Activated CD8-positive, alpha-beta T cell treated with anti-CD3 and anti-CD28 coated beads, Interleukin-2, amount 10 ng/mL, durations not matched to agents 7 days and 5 days (primary cell): ENCODE measurements at regions of chr9 and their contacts with region 1.

Region 1: DNA sequence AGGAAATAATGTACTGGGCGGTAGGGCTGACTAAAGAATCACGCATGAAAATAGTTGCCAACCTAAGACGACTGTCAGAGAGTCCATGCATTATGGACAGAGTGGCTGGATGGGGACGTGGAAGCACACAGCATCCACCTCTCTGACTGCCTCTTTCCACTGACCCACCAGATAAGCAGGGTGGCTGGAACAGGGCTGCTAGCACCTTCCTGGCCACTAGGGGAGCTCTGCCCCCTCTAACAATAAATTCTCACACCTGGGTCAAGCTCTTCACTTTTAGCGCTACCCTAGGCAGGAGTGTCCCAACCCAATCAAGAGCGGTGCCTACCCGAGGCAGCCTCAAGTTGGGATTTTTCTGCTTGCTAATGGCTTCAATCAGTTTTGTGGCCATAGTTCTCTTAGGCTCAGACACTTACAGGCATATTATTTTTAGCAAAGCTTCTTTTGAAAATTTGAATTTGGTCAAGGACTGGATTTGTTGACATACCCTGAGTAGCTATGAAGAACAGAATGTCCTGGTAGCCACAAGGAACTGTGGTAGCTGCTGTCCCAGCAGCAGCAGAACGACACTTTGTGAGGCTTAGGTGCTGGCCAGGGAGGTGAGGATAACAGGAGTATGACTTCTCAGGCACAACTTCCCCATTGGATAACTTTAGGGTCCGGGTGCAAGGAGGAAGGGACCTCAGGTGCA is 6.9 kb upstream of the TPM2 start:
- DNase-seq: peak; percentile 70
- ATAC-seq: peak; percentile 93
- H3K4me3 Mint-ChIP-seq: no peak overlapping the region
- H3K27ac Mint-ChIP-seq: peak overlapping the region; percentile 52
- H3K4me1 Mint-ChIP-seq: peaks cover 9% of the 10 kb centered on the region
- H3K27me3 Mint-ChIP-seq: no peaks in the 10 kb centered on the region

Region 2: GRCh38 chr9:35603987-35604577 is 92.6 kb before region 1 on chr9:
- CTCF ChIA-PET with region 1: interaction called, 38 read pairs
- POLR2A ChIA-PET with region 1: interaction called, 3 read pairs
- DNase-seq: peak; percentile 100
- ATAC-seq: peak; percentile 88
- H3K4me3 Mint-ChIP-seq: peak overlapping the region; percentile 90
- H3K27ac Mint-ChIP-seq: peak overlapping the region; percentile 96
- H3K4me1 Mint-ChIP-seq: peaks cover 37% of the 10 kb centered on the region
- H3K27me3 Mint-ChIP-seq: no peaks in the 10 kb centered on the region

Region 3: GRCh38 chr9:35616681-35617459 is 79.8 kb before region 1 on chr9:
- CTCF ChIA-PET with region 1: interaction called, 52 read pairs
- POLR2A ChIA-PET with region 1: no interaction called
- DNase-seq: peak; percentile 78
- ATAC-seq: peak; percentile 65
- H3K4me3 Mint-ChIP-seq: peak overlapping the region; percentile 79
- H3K27ac Mint-ChIP-seq: peak overlapping the region; percentile 92
- H3K4me1 Mint-ChIP-seq: peaks cover 62% of the 10 kb centered on the region
- H3K27me3 Mint-ChIP-seq: no peaks in the 10 kb centered on the region

Region 4: DNA sequence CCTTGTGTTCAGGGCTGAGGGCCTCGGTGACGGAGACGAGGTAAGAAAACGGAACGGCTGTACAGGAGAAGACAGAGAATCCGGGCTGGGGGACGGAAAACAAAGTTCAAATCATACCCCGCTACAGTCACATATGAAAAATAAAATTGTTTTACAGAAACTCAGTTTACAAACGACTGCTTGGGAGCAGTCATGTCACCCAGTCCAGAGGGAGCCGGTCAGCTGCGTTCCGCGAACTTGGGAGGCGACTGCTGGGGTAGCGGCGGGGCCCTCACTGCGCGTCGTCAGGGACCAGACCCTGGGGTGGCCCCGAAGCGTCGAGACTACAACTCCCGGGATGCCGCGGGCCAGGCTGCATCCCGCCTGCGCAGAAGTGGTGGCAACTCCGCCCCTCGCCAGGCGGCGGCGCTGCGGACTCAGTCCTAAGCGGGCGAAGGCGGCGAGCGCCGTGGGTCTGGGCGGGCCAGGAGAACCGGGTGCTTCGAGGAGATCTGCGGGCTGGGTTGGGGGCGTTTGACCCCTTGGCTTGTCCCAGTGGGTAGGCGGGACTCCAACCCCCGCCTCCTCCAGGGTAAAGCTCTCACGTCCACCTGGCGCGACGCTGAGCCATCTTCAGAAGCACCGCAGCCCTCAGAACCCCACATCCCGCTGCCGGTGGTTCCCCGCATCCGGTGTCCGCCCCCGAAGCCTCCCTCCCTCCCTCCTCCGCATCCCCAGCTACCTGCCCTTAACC is 50.0 kb before region 1 on chr9:
- CTCF ChIA-PET with region 1: interaction called, 57 read pairs
- POLR2A ChIA-PET with region 1: interaction called, 5 read pairs
- DNase-seq: peak; percentile 97
- ATAC-seq: peak; percentile 83
- H3K4me3 Mint-ChIP-seq: peak overlapping the region; percentile 97
- H3K27ac Mint-ChIP-seq: peak overlapping the region; percentile 96
- H3K4me1 Mint-ChIP-seq: peaks cover 67% of the 10 kb centered on the region
- H3K27me3 Mint-ChIP-seq: no peaks in the 10 kb centered on the region

Region 5: DNA sequence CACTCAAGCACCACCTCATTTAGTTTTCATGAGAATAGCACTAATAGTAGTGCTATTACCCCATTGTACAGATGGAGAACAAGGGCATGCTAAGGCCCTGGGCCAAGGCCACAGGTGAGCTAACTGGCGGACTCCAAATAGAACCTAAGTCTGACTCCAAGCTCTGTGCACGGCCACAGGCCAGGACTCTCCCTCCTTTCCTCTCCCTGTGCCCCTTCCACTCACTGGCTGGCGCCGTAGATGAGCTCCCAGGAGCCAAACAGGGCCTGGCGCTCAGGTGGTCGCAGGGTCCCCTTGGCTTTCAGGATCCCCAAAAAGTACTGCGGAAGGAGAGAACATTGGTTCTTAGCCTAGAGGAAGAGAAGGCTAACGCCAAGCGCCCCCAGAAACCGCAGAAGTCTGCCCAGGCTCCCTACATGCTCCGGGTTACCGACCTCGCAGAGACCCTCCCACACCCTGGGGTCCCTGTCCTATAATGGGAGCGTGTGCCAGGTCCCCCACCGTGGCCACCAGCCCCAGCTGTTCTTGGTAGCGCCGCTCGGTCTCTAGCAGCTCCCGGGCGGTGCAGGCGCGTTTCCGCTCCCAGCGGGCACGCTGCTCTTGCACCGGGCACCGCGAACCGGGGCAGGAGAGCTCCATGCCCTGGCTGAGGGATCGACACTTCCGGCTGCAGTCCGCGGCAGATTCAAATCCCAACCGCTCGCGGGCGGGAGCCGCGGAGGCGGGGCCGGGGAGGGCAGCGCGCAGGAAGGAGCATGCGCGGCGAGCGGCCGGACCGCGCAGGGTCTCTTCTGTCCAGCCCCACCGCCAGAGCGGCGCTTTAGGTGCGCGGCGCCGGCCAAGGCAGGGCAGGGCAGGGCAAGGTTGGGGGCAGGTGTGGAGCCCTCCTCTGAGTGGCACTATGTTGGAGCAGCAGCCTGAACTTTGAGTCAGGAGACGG is 31.9 kb before region 1 on chr9 and contains the start of gene ARHGEF39:
- CTCF ChIA-PET with region 1: interaction called, 64 read pairs
- POLR2A ChIA-PET with region 1: interaction called, 3 read pairs
- DNase-seq: peak; percentile 84
- ATAC-seq: peak; percentile 84
- H3K4me3 Mint-ChIP-seq: peak within 1 kb of the TSS; percentile 86
- H3K27ac Mint-ChIP-seq: peak within 1 kb of the TSS; percentile 86
- H3K4me1 Mint-ChIP-seq: peaks cover 68% of the 10 kb centered on the region
- H3K27me3 Mint-ChIP-seq: no peaks in the 10 kb centered on the region
- total RNA-seq, gene ARHGEF39: 17.2 to 17.3 TPM

Region 6: GRCh38 chr9:35682051-35682450 is 14.6 kb before region 1 on chr9:
- CTCF ChIA-PET with region 1: interaction called, 32 read pairs
- POLR2A ChIA-PET with region 1: interaction called, 3 read pairs
- DNase-seq: no peak
- ATAC-seq: no peak
- H3K4me3 Mint-ChIP-seq: no peak overlapping the region
- H3K27ac Mint-ChIP-seq: no peak overlapping the region
- H3K4me1 Mint-ChIP-seq: peaks cover 2% of the 10 kb centered on the region
- H3K27me3 Mint-ChIP-seq: no peaks in the 10 kb centered on the region

Region 7: DNA sequence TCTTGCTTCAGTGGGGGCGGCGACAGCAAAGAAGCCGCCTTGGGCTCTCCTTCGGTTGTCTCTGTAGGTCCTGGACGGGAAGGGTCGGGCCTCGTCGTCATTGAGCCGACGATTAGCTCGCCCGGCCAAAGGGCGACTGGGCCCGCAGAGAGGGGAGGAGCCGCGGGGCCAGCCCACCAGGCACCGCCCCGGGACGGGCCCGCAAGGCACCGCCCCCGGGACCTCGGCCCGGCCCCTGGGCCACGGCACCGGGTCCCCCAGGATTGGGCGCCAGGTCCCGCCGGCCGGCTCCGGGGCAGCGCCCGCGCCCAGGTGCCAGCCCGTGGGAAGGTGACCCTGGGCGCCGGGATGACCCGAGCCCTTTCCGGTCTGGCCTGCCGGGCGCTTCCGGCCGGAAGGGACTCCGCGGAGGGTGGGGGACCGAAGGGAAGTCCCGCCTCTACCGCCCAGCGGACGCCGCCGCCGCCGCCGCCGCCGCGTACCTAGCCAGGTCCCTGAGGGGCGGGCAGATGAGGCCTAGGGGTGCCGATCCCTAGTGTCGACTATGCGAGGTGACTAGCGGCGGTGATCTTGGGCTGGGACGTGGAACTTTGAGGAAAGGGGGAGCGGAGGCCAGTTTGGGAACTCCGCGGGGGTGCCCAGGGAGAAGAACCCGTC is 52.3 kb after region 1 on chr9 and contains the starts of genes GBA2 and RGP1:
- CTCF ChIA-PET with region 1: interaction called, 23 read pairs
- POLR2A ChIA-PET with region 1: interaction called, 3 read pairs
- DNase-seq: peak; percentile 78
- ATAC-seq: peak; percentile 83
- H3K4me3 Mint-ChIP-seq: peak within 1 kb of the TSS; percentile 90
- H3K27ac Mint-ChIP-seq: peak within 1 kb of the TSS; percentile 87
- H3K4me1 Mint-ChIP-seq: peaks cover 39% of the 10 kb centered on the region
- H3K27me3 Mint-ChIP-seq: no peaks in the 10 kb centered on the region
- total RNA-seq, gene GBA2: 52.6 to 56.4 TPM
- total RNA-seq, gene RGP1: 22.1 to 22.9 TPM